IMR-90 (cell line): ENCODE measurements at regions of chr1 and their contacts with region 1.

Region 1: GRCh38 chr1:109034382-109034781 is 7.5 kb downstream of the WDR47 start:
- DNase-seq: no peak
- ATAC-seq: no peak
- H3K4me3 ChIP-seq: no peak overlapping the region
- H3K27ac ChIP-seq: no peak overlapping the region
- H3K4me1 ChIP-seq: no peaks in the 10 kb centered on the region
- H3K27me3 ChIP-seq: no peaks in the 10 kb centered on the region
- CTCF ChIP-seq: no peak
- POLR2A ChIP-seq: no peak
- RAD21 ChIP-seq: no peak

Region 2: GRCh38 chr1:108963052-108963686 is 71.2 kb before region 1 on chr1 and contains the start of gene CLCC1:
- CTCF ChIA-PET with region 1: no interaction called
- POLR2A ChIA-PET with region 1: no interaction called
- dilution Hi-C with region 1: no loop called
- in situ Hi-C with region 1: no loop called
- intact Hi-C with region 1: no loop called
- DNase-seq: peak; percentile 90
- ATAC-seq: peak; percentile 99
- H3K4me3 ChIP-seq: peak within 1 kb of the TSS; percentile 100
- H3K27ac ChIP-seq: peak within 1 kb of the TSS; percentile 98
- H3K4me1 ChIP-seq: 0 out of 2 replicates have a peak, but pooled peaks cover 2% of the 10 kb centered on the region
- H3K27me3 ChIP-seq: no peaks in the 10 kb centered on the region
- CTCF ChIP-seq: no peak
- POLR2A ChIP-seq: peak; percentile 79; the same call in 1 of the 2 replicates
- RAD21 ChIP-seq: no peak
- total RNA-seq, gene CLCC1: 29.6 and 41.4 TPM in 2 replicates

Region 3: GRCh38 chr1:108983114-108983513 is 51.3 kb before region 1 on chr1:
- CTCF ChIA-PET with region 1: no interaction called
- POLR2A ChIA-PET with region 1: no interaction called
- dilution Hi-C with region 1: no loop called
- in situ Hi-C with region 1: no loop called
- intact Hi-C with region 1: loop called (anchors 5 kb)
- DNase-seq: no peak
- ATAC-seq: no peak
- H3K4me3 ChIP-seq: no peak overlapping the region
- H3K27ac ChIP-seq: no peak overlapping the region
- H3K4me1 ChIP-seq: no peaks in the 10 kb centered on the region
- H3K27me3 ChIP-seq: no peaks in the 10 kb centered on the region
- CTCF ChIP-seq: no peak
- POLR2A ChIP-seq: no peak
- RAD21 ChIP-seq: no peak

Region 4: DNA sequence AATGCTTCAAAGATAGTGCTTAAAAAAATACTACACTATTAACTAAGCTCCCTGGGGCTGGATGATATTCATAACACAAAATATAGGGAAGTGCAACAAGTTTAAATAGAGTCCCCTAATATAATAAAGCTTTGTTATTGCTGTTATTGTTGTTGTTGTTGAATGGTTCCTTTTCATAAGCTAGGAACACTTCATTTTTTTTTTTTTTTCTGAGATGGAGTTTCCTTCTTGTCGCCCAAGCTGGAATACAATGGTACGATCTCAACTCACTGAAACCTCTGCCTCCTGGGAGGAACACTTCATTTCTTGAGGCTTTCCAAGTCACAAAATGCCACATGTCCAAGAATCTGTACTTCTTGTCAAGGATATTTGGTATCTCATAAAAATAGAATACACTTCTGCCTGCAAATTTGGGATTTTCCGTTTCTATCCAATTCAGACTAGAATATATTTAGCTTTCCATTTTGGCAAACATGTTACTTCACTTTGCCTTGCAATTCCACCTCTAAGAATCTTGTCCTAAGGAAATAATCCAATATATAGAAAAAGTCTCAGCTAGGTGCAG is 13.6 kb before region 1 on chr1:
- CTCF ChIA-PET with region 1: no interaction called
- POLR2A ChIA-PET with region 1: no interaction called
- dilution Hi-C with region 1: no loop called
- in situ Hi-C with region 1: no loop called
- intact Hi-C with region 1: no loop called
- DNase-seq: no peak
- ATAC-seq: no peak
- H3K4me3 ChIP-seq: no peak overlapping the region
- H3K27ac ChIP-seq: no peak overlapping the region
- H3K4me1 ChIP-seq: peaks cover 1% of the 10 kb centered on the region
- H3K27me3 ChIP-seq: no peaks in the 10 kb centered on the region
- CTCF ChIP-seq: no peak
- POLR2A ChIP-seq: no peak
- RAD21 ChIP-seq: no peak